Posterior vena cava (tissue), 2 donors: ENCODE measurements at regions of chr11 and their contacts with region 1.

Region 1: GRCh38 chr11:67265633-67266423 is 445 bp upstream of the GRK2 start:
- DNase-seq: peak; percentile 95

Region 2: DNA sequence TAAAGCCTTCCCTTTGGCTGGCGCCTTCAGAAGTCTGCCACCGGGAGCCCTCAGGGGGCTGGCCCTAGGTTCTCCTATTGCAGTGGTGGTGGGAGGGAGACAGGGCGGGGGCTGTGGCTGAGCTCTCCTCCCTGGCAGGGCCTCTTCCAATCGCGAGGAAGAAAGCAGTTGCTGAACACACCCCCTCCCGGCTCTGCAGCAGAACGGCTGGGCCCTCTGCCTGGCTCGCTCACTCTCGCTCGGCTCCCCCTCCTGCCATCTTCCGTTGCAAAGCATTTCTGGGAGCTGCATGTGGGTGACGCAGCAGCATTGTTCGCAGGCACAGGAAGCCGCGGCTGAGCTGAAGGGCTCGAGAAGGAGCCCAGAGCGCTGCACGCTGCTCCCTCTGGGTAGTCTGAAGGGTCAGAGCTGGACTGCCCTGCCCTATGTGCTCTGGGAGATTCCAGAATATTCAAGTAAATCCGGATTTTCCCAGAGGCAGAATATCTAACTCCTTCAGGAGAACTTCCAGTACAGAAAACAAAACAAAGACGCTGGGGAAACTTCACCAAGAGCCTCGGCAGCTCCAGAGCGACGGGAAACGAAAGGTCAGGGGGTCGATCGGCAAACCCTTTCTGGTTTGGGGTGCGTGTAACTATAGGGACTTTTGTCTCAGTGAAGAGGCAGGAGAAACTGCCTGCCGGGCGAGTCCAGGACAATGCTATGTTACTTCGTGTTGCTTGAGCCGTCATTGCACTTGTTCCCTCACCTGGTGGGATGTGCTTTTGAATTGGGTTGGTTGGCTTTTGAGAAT is 25.8 kb before region 1 on chr11:
- intact Hi-C with region 1: no loop called
- DNase-seq: peak; percentile 99

Region 3: GRCh38 chr11:67317205-67317887 is 51.5 kb after region 1 on chr11:
- intact Hi-C with region 1: loop called (anchors 2 kb)
- DNase-seq: peak; percentile 99

Region 4: DNA sequence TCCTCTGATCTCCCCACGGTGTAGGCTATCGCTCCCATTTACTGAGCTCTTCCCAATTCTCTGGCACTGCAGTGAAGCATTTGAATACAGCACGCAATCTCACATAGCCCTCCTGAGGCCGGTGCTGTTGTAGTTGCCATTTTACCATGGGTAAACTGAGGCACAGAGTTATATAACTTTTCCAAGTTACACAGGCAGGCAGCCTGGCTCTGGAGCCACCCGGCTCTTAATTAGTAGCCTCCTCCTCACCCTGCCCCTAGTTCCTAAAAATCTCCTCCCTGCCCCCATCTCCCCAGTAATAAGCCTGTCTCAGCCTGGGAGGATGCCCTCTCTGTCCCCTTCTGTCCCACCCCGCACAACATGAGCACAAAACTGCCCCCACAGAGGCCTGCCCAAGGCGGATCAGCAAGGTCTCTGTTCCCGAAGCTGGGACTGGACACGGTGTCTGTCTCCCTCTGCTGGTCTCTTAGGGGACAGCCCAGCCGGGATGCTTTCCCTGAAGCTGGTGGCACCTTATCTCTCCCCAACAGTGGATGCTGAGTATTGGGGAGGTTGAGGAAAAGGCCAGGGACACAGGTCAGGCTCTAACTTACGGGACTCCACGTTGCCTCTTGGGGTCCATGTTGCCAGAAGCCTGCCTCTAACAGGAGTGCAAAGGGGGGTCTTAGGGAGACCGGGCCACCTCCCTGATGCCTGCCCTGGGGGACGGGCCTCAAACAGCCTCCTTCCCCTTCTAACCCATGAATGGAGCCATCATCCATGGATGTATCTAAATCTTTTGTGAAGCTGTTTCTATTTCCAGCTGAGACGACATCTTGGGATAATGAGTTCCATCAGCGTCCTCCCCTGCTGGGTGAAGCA is 116.7 kb after region 1 on chr11:
- intact Hi-C with region 1: loop called (anchors 5 kb)
- DNase-seq: peak; percentile 95

Region 5: DNA sequence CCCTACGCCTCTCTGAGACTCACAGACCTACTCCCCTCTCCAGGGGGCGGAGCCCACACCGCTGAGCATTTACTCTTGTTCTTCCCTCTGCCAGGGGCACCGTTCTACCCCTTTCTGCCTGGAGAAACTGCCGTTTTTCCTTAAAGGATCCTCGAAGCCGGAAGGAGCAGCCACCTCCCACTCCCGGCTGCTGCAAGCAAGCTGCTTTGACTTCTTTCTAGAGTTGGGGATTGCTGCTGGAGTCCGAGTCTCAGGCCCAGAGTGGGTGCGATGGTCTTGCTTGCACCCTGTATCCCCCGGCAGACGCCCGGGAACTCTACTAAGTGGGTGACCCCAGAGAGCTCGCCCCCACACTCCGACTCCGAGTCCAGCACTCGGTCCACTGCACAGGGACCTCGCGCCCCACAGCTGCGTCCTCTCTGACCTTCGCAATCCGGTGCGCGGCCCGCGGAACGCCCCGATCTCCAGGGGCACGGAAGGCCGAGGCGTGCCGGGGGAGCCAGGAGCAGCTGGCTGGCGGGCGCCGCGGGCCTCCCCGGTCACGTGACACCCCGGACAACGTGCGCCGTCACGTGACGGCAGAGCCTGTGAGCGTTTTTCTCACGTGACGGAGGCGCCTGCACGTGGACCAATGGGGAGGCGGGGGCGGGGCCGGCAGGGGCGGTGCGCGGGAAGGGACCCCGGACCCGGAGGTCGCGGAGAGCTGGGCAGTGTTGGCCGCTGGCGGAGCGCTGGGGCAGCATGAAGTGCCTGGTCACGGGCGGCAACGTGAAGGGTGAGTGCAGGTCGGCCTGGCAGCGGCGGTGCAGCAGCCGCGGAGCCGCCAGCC is 125.7 kb after region 1 on chr11 and contains the start of gene RAD9A:
- intact Hi-C with region 1: loop called in 1 of 2 experiments (anchors 5 kb)
- DNase-seq: peak; percentile 98
- total RNA-seq, gene RAD9A: 10.3 to 11.4 TPM